GM10248 (cell line): ENCODE measurements at regions of chr22 and their contacts with region 1.

Region 1: DNA sequence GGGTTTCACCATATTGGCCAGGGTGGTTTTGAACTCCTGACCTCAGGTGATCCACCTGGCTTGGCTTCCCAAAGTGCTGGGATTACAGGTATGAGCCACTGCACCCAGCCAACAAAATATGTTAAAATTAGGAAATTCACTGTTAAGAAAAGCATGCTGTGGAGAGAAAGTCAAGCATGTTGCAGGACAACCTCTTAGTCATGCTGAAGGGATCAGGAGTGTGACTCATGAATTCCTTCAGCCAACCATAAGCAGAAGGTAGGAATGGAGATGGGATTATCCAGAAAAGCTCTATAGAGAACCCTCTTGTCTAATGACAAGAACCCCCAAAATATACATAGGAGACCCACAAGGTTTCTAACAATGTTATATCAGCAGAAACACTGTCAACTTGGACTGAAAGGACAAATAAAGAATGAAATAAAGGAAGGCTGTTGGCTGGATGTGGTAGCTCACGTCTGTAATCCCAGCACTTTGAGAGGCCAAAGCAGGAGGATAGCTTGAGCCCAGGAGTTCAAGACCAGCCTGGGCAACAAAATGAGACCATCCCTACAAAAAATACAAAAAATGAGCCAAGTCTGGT is 16.0 kb downstream of the MRTFA start:
- DNase-seq: no peak
- CTCF ChIP-seq: no peak

Region 2: DNA sequence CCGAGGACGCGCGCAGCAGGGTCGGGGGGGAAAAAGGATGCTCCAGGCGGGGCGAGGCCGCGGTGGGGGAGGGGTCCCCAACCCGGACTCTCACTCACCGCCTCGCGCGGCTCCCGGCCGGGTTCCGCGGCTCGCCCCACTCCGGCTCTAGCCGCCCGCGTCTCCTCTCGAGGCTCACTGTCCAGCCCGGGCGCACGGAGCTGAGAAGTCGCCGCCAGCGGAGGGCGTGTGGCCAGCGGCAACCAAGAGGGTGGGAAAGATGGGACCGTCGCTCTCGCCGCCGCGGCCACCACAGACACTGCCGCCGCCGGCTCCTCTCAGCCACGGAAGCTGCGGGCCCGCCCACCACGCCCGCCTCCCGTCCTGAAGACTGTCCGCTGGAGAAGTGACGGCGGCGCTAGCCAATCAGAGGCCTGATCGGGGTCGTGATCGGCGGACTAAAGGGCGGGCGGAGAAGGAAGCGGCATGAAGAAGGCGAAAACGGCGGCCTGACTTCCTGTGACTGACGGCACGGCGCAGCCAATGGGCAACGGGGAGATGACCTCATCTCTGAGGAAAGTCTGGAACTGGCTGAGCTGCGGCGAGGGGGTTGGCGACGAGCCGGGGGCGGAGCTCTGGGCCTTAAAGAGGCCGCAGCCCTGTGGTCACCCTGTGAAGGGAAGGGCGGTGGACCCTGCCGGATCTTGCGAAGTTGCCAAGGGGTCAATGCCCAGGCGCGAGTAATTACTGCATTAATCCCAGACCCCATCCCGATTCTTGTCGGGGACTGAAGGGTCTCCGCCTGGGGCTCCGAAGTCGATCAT is 16.0 kb after region 1 on chr22 and contains the start of gene MRTFA:
- CTCF ChIA-PET with region 1: interaction called, 11 read pairs
- POLR2A ChIA-PET with region 1: interaction called, 4 read pairs
- DNase-seq: peak; percentile 96
- CTCF ChIP-seq: no peak